ENCODE measurements at regions of chr1 and their contacts with region 1.

Region 1: DNA sequence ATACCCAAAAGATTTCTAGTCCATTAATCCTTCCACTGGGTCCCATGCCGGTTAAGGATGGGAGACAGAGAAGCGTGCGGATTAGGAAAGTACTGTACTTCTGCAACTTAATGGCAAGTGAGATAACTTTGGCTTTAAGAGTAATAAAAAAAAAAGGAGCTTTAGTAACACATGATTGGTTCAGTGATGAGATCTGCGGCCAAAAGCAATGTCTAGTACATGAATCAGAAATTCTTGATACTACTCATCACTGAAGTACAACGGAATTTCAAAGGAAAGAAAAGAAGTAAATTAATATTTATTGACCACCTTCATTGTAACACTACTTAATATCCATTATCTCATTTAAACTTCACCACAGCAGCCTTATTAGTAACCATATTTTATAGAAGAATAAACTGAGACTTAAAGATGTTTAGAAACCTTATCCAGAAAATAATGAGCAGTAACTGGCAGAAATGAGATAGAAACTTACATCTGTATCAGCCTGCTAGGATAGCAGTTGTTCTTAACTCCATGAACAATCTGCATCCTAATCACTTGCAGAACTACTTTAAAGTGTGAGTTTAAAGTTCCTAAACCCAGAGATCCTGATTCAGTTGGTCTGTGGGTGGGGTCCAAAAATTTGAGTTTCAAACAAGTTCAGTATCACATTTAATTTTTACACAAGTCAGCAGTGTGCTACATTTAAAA is 14.1 kb upstream of the NUF2 start:
- ATAC-seq: no peak
- H3K4me3 ChIP-seq: no peak overlapping the region
- H3K27ac ChIP-seq: no peak overlapping the region
- H3K4me1 ChIP-seq: no peaks in the 10 kb centered on the region

Region 2: GRCh38 chr1:162847839-162848453 is 459.7 kb before region 1 on chr1:
- in situ Hi-C with region 1: loop called in 7 of 9 experiments (anchors 10 to 25 kb)
- ATAC-seq: peak in 4 of 8 experiments; percentile 39 to 59 (median 50)
- H3K4me3 ChIP-seq: no peak overlapping the region
- H3K27ac ChIP-seq: no peak overlapping the region
- H3K4me1 ChIP-seq: no peaks in the 10 kb centered on the region

Region 3: GRCh38 chr1:162878000-162878596 is 429.5 kb before region 1 on chr1:
- in situ Hi-C with region 1: loop called in 8 of 9 experiments (anchors 10 to 25 kb)
- ATAC-seq: peak; percentile 29 to 78 (median 58)
- H3K4me3 ChIP-seq: no peak overlapping the region
- H3K27ac ChIP-seq: no peak overlapping the region
- H3K4me1 ChIP-seq: peaks cover 0 to 7% of the 10 kb centered on the region in 2 donors

Region 4: DNA sequence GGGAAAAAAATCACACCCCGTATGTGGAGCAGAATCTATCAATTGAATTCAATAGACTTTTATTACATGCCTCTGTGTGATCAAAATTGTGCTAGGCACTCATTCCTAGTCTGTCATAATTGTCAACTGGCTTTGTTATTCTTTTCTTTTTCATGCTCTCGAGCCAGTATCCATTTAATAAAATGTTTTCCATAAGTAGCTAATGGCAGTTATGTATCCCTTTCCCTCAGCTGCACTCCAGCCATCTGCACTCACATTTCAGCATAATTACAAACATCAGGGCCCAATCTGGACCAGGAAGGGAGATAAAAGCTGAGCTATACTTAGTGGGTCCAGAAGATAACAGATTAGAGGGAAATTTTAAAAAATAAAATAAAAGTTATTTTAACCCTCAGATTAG is 120.8 kb before region 1 on chr1:
- in situ Hi-C with region 1: loop called in 1 of 9 experiments (anchors 10 kb)
- ATAC-seq: no peak
- H3K4me3 ChIP-seq: no peak overlapping the region
- H3K27ac ChIP-seq: no peak overlapping the region
- H3K4me1 ChIP-seq: no peaks in the 10 kb centered on the region

Measured in motor neuron (in vitro differentiated cells).